ENCODE measurements at regions of chr4 and their contacts with region 1.

Region 1: GRCh38 chr4:115090483-115091075 is 22.8 kb downstream of the NDST4 start:
- DNase-seq: no peak
- H3K4me3 Mint-ChIP-seq: no peak overlapping the region
- H3K27ac Mint-ChIP-seq: no peak overlapping the region
- H3K4me1 Mint-ChIP-seq: no peaks in the 10 kb centered on the region
- H3K27me3 Mint-ChIP-seq: no peaks in the 10 kb centered on the region
- CTCF ChIP-seq: peak; percentile 19

Region 2: GRCh38 chr4:115292320-115293092 is 201.9 kb after region 1 on chr4:
- CTCF ChIA-PET with region 1: no interaction called
- intact Hi-C with region 1: no loop called
- DNase-seq: no peak
- H3K4me3 Mint-ChIP-seq: no peak overlapping the region
- H3K27ac Mint-ChIP-seq: no peak overlapping the region
- H3K4me1 Mint-ChIP-seq: no peaks in the 10 kb centered on the region
- H3K27me3 Mint-ChIP-seq: no peaks in the 10 kb centered on the region
- CTCF ChIP-seq: no peak

Region 3: DNA sequence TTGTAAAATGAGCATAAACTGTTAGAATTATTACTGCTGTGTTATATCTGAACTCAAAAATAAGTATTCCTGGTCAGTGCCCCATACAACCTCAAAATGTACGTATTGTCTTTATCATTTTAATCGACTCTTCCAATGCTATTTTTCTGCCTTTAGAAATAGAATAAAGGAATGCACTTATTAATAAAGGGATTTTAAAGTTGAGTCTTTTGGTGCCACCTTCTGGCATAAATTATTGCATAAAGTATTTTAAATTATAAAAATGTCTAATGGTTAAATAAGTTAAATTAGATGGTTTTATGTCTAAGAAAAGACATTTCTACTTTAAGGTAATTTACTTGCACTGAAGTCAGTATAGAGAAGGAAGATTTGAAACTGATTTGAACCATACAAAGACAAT is 446.8 kb after region 1 on chr4:
- CTCF ChIA-PET with region 1: no interaction called
- intact Hi-C with region 1: loop called (anchors 2 kb)
- DNase-seq: no peak
- H3K4me3 Mint-ChIP-seq: no peak overlapping the region
- H3K27ac Mint-ChIP-seq: no peak overlapping the region
- H3K4me1 Mint-ChIP-seq: no peaks in the 10 kb centered on the region
- H3K27me3 Mint-ChIP-seq: no peaks in the 10 kb centered on the region
- CTCF ChIP-seq: no peak

Region 4: GRCh38 chr4:115851918-115852766 is 761.6 kb after region 1 on chr4:
- CTCF ChIA-PET with region 1: no interaction called
- intact Hi-C with region 1: loop called (anchors 2 kb)
- DNase-seq: peak; percentile 54
- H3K4me3 Mint-ChIP-seq: no peak overlapping the region
- H3K27ac Mint-ChIP-seq: no peak overlapping the region
- H3K4me1 Mint-ChIP-seq: no peaks in the 10 kb centered on the region
- H3K27me3 Mint-ChIP-seq: no peaks in the 10 kb centered on the region
- CTCF ChIP-seq: peak; percentile 19

Region 5: GRCh38 chr4:116598980-116599744 is 1508.6 kb after region 1 on chr4:
- CTCF ChIA-PET with region 1: no interaction called
- intact Hi-C with region 1: no loop called
- DNase-seq: no peak
- H3K4me3 Mint-ChIP-seq: no peak overlapping the region
- H3K27ac Mint-ChIP-seq: no peak overlapping the region
- H3K4me1 Mint-ChIP-seq: no peaks in the 10 kb centered on the region
- H3K27me3 Mint-ChIP-seq: no peaks in the 10 kb centered on the region
- CTCF ChIP-seq: no peak